CD8-positive, alpha-beta memory T cell (primary cell): ENCODE measurements at regions of chr2 and their contacts with region 1.

Region 1: GRCh38 chr2:231482806-231483391 is 18.6 kb upstream of the NCL start:
- DNase-seq: peak; percentile 59 to 81 (median 64)
- H3K4me3 ChIP-seq: peak overlapping the region; percentile 64
- H3K4me3 Mint-ChIP-seq: peak overlapping the region; percentile 69 to 88 (median 78)
- H3K27ac ChIP-seq: peak overlapping the region; percentile 67
- H3K27ac Mint-ChIP-seq: peak overlapping the region; percentile 81 to 95 (median 90)
- H3K4me1 ChIP-seq: peaks cover 4% of the 10 kb centered on the region
- H3K4me1 Mint-ChIP-seq: peaks cover 4 to 18% (median 8%) of the 10 kb centered on the region in 3 donors
- H3K27me3 ChIP-seq: no peaks in the 10 kb centered on the region
- H3K27me3 Mint-ChIP-seq: peaks cover 0 to 2% of the 10 kb centered on the region in 2 donors

Region 2: GRCh38 chr2:230987137-230988020 is 495.5 kb before region 1 on chr2:
- CTCF ChIA-PET with region 1: no interaction called
- POLR2A ChIA-PET with region 1: no interaction called
- DNase-seq: peak; percentile 65 to 80 (median 75)
- H3K4me3 ChIP-seq: peak overlapping the region; percentile 62
- H3K4me3 Mint-ChIP-seq: peak overlapping the region in 6 of 7 donors; percentile 38 to 79 (median 58)
- H3K27ac ChIP-seq: no peak overlapping the region
- H3K27ac Mint-ChIP-seq: peak overlapping the region in 3 of 8 donors; percentile 15 to 68 (median 17)
- H3K4me1 ChIP-seq: peaks cover 9% of the 10 kb centered on the region
- H3K4me1 Mint-ChIP-seq: peaks cover 3 to 40% (median 25%) of the 10 kb centered on the region in 3 donors
- H3K27me3 ChIP-seq: no peaks in the 10 kb centered on the region
- H3K27me3 Mint-ChIP-seq: peaks cover 9 to 12% of the 10 kb centered on the region in 2 donors

Region 3: DNA sequence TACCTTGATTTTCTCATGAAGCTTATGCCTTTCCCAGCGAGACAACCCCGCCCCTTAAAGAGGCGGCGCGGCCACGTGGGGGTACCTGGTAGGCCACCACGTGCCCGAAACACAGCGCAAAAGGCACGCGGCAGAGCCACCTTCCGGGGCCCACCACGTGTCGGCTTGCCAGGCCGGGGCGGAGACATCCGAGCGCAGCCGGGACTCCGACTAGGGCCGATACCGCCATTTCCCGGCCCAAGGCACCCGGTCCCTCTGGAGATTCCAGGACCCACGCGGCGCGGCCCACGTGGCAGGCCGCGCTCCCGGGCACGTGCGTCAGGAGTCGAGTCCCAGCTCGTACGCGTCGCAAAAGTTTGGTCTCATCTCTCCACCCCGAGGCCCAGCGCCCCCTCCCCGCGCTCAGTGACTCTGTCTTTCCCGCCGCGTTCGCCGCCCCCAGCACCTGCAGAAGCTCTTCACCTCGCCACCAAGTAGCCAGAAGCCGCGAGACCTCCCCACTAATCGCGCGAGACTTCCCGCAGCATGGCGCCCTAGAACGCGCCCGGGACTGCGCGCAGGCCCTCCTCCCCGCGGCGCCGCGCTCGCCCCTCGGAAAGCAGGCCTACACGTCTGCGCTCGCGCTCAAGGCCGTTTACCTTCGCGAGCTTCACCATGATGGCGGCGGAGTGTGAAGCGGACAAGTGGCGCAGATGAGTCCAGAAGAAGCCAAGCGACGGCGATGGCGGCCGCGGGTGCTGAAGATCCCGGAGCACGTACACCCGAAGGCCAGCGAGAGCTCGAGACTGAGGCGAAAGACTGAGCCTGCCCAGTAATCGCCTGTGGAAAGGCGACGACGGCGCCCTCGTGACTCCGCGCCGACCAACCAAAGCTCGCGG is 19.0 kb before region 1 on chr2 and contains the start of gene NCL:
- CTCF ChIA-PET with region 1: interaction called, 67 read pairs
- POLR2A ChIA-PET with region 1: interaction called, 50 read pairs
- DNase-seq: peak; percentile 79 to 93 (median 88)
- H3K4me3 ChIP-seq: peak within 1 kb of the TSS; percentile 88
- H3K4me3 Mint-ChIP-seq: peak within 1 kb of the TSS; percentile 94 to 100 (median 96)
- H3K27ac ChIP-seq: peak within 1 kb of the TSS; percentile 98
- H3K27ac Mint-ChIP-seq: peak within 1 kb of the TSS; percentile 98 to 100 (median 100)
- H3K4me1 ChIP-seq: peaks cover 42% of the 10 kb centered on the region
- H3K4me1 Mint-ChIP-seq: peaks cover 47 to 55% (median 54%) of the 10 kb centered on the region in 3 donors
- H3K27me3 ChIP-seq: no peaks in the 10 kb centered on the region
- H3K27me3 Mint-ChIP-seq: peaks cover 0 to 13% of the 10 kb centered on the region in 2 donors
- total RNA-seq, gene NCL: 1,673 to 1,772 TPM

Region 4: GRCh38 chr2:231469583-231469950 is 13.3 kb before region 1 on chr2:
- CTCF ChIA-PET with region 1: interaction called, 67 read pairs
- POLR2A ChIA-PET with region 1: interaction called, 50 read pairs
- DNase-seq: no peak
- H3K4me3 ChIP-seq: no peak overlapping the region
- H3K4me3 Mint-ChIP-seq: peak overlapping the region in 2 of 7 donors; percentile 36 to 80
- H3K27ac ChIP-seq: no peak overlapping the region
- H3K27ac Mint-ChIP-seq: peak overlapping the region in 3 of 8 donors; percentile 36 to 72 (median 63)
- H3K4me1 ChIP-seq: peaks cover 6% of the 10 kb centered on the region
- H3K4me1 Mint-ChIP-seq: peaks cover 12 to 15% (median 15%) of the 10 kb centered on the region in 3 donors
- H3K27me3 ChIP-seq: no peaks in the 10 kb centered on the region
- H3K27me3 Mint-ChIP-seq: peaks cover 0 to 2% of the 10 kb centered on the region in 2 donors

Region 5: DNA sequence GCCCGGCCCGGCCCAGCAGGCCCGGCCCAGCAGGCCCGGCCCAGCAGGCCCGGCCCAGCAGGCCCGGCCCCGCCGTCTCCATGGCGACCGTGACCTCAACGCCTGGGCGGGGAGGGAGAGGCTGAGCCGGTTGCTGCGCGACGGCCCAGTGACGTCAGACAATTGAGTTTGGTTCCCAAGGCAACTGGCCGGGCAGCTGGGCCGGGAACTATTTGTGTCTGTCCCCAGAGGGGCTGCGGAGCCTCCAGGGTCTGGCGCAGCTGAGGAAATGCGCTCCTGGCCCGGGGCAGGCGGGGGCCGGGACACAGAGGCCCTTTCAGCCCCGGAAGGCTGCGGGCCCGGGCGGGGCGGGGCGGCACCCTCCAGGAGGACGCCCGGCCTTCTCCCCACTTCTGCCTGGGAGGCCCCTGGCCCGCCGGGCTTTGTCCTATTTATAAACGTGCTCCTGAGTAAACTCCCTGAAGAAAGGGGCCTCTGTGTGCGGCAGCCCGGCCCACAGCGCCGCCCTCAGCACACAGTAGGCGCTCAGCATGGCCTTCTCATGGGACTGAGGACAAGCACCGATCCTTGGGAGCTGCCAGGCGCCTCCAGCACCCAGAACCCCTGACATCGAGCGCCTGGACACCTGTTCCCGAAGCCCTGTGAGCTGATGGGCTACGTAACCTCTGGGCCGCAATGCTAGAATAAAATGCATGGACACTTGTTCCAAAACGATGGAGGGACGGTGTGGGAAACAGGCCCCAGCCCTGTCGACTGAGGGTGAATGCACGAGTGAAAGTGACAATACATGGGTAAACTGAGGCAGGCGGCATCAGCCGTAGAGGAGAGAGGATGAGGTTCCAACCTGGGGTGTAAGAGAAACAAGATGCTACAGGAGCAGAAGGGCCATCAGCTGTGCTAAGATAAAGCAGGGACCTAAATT is 122.0 kb after region 1 on chr2:
- CTCF ChIA-PET with region 1: interaction called, 19 read pairs
- POLR2A ChIA-PET with region 1: no interaction called
- DNase-seq: peak; percentile 91 to 99 (median 97)
- H3K4me3 ChIP-seq: peak overlapping the region; percentile 49
- H3K4me3 Mint-ChIP-seq: peak overlapping the region; percentile 60 to 87 (median 74)
- H3K27ac ChIP-seq: peak overlapping the region; percentile 87
- H3K27ac Mint-ChIP-seq: peak overlapping the region; percentile 71 to 97 (median 94)
- H3K4me1 ChIP-seq: peaks cover 8% of the 10 kb centered on the region
- H3K4me1 Mint-ChIP-seq: peaks cover 5 to 15% (median 11%) of the 10 kb centered on the region in 3 donors
- H3K27me3 ChIP-seq: no peaks in the 10 kb centered on the region
- H3K27me3 Mint-ChIP-seq: peaks cover 0 to 1% of the 10 kb centered on the region in 2 donors